RWPE1 (cell line): ENCODE measurements at regions of chr6 and their contacts with region 1.

Region 1: DNA sequence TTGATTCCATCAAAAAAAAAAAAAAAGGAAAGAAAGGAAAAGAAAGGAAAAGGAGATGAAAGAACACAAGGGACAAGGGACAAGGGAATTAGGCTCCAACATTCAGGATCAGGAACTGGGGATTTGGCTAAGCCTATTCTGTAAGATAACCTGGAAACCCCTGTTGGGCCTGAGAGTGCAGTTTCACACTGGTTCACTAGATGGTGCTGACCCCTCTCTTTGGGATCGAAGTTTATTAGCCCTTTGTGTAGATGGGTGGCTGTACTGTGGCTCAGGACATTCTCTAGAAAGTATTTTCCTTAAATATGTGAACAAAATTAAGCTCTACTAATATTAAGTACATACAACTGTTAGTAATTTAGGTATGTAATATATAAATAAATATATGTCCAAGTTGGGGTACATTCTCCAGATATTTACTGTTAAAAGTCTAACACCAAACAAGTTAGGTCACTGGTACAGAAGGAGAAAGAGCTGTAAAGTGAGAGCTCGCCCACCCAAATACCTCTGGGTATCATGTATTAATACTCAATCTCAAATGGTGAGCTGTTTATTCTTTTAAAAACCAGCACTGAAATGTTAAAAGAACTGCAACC is 6.3 kb downstream of the OR2A4 start:
- DNase-seq: peak; percentile 73
- H3K27ac ChIP-seq: no peak overlapping the region
- CTCF ChIP-seq: peak; percentile 72

Region 2: GRCh38 chr6:131673184-131673583 is 21.7 kb before region 1 on chr6:
- CTCF ChIA-PET with region 1: no interaction called
- POLR2A ChIA-PET with region 1: no interaction called
- DNase-seq: no peak
- H3K27ac ChIP-seq: no peak overlapping the region
- CTCF ChIP-seq: no peak

Region 3: DNA sequence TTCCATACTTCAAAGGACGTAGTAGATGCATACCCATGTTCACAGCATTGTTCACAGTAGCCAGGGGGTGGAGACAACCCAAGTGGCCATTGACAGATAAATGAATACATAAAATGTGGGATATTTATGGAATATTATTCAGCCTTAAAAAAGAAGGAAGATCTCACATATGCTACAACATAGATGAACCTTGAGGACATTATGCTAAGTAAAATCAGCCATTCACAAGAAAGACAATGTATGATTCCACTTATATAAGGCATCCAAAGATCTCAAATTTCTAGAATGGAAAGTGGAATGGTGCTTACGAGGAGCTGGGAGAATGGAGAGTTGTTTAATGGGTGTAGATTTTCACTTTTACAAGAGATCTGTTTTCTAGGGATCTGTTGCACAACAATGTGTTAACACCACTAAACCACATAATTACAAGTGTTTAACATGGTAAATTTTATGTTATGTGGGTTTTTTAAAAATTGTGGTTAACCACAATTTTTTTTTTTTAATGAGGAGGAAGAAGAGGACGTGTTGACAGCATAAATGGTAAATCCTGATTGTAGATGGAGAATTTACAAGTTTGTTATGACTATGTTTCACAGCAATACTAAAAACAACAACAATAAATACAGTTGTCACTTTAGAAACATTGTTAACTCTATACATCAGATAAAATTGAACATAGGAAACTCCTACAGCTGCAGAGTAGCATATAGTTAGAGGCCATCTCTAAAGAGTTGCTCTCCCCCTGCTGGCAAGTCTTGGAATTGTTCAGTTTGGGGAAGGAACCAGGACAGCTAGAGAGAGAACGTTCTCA is 214.7 kb after region 1 on chr6:
- CTCF ChIA-PET with region 1: interaction called, 13 read pairs
- POLR2A ChIA-PET with region 1: no interaction called
- DNase-seq: peak; percentile 40
- H3K27ac ChIP-seq: no peak overlapping the region
- CTCF ChIP-seq: peak; percentile 89

Region 4: DNA sequence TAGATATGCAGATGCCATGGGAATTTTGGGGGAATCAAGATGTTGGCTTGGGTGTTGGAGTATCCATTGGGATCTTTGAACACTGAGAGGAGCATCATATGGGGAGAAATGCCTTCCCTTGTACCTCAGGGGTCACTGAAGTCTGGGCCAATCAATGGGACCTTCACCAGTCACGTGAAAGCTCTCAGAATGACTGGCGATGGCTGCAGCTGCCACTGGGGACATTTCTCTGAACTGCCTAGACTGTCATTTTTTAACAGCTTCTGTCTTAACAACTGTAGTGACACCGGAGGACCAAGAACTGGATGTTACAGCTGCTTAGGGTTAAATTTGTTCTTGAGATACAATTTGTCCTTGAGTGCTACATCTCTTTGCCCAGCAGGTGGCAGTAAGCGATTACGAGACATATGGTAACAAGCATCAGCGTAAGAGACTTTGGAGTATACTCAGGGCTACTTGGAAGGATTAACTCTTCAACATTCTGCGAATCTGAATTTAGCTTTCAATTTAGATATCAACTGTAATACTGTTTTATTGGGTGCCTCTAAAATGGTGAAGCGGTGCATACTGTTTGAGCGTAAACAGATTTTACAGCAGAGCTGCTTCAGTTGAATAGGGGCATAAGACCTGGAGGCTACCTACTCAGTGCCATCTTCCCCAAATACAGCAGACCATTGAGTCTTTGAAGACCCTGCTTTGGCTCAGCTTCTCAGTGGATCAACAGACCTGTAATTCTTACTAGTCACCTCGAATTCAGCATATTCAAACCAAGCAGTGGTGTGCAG is 220.2 kb after region 1 on chr6:
- CTCF ChIA-PET with region 1: interaction called, 13 read pairs
- POLR2A ChIA-PET with region 1: no interaction called
- DNase-seq: peak; percentile 46
- H3K27ac ChIP-seq: no peak overlapping the region
- CTCF ChIP-seq: peak; percentile 80